ENCODE measurements at regions of chr1 and their contacts with region 1.

Region 1: DNA sequence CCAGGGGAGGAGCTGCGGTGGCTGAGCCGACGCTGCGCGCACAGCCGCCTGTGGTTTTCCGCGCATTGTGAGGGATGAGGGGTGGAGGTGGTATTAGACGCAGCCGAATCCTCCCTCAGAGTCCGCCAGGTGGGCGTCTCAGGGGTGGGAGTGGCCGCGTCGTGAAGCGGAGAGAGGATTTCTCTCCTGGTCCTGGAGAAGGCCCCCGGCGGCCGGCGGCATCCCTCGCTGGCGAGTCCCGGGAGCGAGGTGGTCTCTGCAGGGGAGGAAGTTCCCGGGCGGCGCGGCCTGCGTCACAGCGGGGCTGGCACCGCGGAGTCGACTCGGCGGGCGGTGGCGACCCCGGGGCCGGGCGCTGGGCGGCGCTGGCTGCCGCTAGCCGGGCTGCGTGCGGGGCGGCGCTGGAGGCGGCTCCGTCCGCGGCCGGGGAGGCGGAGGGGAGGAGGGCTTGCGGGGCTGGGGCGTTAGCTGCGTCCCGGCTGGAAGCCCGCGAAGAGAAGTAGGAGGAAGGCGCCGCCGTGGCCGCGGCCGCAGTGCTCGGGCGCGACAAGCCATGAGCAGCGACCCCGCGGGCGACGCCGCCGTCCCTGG is at the start of gene LRRC8C:
- DNase-seq: peak; percentile 90
- H3K4me3 Mint-ChIP-seq: peak within 1 kb of the TSS; percentile 88
- H3K27ac Mint-ChIP-seq: peak within 1 kb of the TSS; percentile 89
- H3K4me1 Mint-ChIP-seq: peaks cover 71% of the 10 kb centered on the region
- H3K27me3 Mint-ChIP-seq: no peaks in the 10 kb centered on the region
- total RNA-seq, gene LRRC8C: 52.5 to 55.6 TPM

Region 2: DNA sequence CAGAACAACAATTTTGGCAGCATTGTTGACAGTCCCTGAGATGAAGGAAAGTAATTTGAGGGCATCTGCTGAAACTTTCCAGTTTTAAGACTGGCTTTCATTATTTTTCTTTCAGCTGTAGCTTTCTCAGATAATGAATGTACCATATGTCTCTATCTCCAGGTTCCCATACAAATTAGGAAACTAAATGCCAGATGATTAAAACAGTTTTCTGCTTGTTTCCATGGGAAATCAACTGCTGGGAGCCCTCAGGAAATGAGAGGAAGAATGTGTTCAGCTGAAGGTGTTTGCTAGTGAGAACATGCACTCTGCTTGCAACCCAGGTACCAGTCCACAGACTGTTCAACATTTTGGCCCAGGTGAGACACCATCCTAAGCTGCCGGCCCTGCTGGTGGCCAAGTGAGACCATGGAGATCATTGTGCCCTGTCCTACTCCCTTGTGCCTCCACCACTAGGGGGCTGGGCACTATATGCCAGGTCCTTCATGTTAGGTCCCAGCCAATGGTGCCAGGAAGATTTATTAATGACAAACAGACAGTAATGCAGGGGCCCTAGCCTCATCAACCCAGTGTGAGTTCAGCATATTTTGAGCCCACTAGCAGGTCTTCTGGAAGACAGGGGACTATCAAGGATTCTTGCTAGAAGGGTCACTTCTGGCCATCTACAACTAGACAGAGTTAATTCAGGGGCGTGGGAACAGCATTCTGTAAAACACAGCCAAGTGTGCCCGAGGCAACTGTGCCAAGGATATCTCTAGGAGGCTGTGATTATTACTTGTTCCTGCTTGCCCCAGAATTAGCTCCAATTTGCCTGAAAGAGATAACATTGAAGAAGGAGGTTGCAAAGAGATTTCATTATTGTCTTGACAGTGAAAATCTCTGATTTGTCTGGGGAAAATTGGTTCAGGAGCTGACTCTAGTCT is 16.8 kb before region 1 on chr1:
- CTCF ChIA-PET with region 1: interaction called, 102 read pairs
- POLR2A ChIA-PET with region 1: interaction called, 828 read pairs
- DNase-seq: no peak
- H3K4me3 Mint-ChIP-seq: no peak overlapping the region
- H3K27ac Mint-ChIP-seq: no peak overlapping the region
- H3K4me1 Mint-ChIP-seq: peaks cover 83% of the 10 kb centered on the region
- H3K27me3 Mint-ChIP-seq: no peaks in the 10 kb centered on the region

Region 3: DNA sequence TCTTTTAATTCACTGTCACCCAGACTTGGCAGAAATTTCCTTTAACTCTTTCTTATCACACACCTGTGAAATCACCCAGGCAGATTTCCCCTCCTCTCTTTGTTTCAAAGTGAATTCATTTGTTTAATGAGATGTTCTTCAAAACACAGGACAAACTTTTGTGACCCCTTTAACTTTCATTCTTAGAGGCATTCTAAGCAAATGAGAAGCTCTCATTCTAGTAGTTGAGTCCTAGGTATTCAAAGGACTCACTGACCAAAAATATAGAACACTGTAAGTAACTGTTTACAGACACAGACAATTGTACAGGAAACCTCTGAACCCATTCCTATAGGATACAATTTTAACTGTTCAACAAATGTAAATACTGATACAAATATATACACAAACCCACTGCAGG is 17.0 kb after region 1 on chr1:
- CTCF ChIA-PET with region 1: interaction called, 5 read pairs
- POLR2A ChIA-PET with region 1: interaction called, 139 read pairs
- DNase-seq: no peak
- H3K4me3 Mint-ChIP-seq: no peak overlapping the region
- H3K27ac Mint-ChIP-seq: peak overlapping the region; percentile 3
- H3K4me1 Mint-ChIP-seq: peaks cover 62% of the 10 kb centered on the region
- H3K27me3 Mint-ChIP-seq: no peaks in the 10 kb centered on the region

Region 4: DNA sequence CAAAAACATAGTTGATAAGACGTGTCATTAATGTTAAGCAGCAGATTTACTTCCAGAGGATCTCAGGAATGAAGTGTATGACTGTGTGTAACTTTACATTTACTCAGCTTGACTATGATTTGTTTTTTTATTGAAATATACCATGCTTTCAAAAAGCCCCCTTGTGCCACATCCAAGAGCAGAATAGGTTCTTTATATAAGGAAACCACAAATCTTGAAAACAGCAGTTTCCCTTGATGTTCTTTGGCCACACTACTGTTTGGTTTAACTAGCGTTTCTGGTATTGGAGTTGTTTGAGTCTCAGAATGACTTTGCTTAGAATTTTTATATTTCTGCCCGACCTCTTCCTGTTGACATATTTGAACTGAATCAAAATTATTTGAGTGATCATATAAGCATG is 25.1 kb after region 1 on chr1:
- CTCF ChIA-PET with region 1: interaction called, 4 read pairs
- POLR2A ChIA-PET with region 1: interaction called, 139 read pairs
- DNase-seq: no peak
- H3K4me3 Mint-ChIP-seq: peak overlapping the region; percentile 15
- H3K27ac Mint-ChIP-seq: peak overlapping the region; percentile 81
- H3K4me1 Mint-ChIP-seq: peaks cover 88% of the 10 kb centered on the region
- H3K27me3 Mint-ChIP-seq: no peaks in the 10 kb centered on the region

Region 5: DNA sequence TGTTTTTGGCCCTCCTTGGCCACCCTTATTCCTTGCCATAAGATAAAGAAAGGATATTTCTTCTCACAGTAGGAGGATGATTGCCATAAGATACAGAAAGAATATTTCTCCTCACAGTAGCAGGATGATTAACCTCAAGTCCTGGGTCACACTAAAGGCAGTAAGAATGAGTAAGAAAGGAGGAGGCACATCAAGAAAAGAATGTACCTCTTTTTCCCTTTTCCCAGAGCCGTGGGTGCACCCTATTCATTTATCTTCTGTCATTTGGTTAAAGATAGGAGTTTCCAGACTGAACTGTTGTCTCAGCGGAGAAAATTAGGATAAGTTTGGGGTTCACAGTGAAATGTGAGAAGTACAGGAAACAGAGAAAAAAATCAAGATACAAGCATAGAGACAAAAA is 52.7 kb after region 1 on chr1:
- CTCF ChIA-PET with region 1: no interaction called
- POLR2A ChIA-PET with region 1: no interaction called
- DNase-seq: no peak
- H3K4me3 Mint-ChIP-seq: no peak overlapping the region
- H3K27ac Mint-ChIP-seq: no peak overlapping the region
- H3K4me1 Mint-ChIP-seq: peaks cover 46% of the 10 kb centered on the region
- H3K27me3 Mint-ChIP-seq: no peaks in the 10 kb centered on the region

Region 6: GRCh38 chr1:89701746-89702241 is 69.0 kb after region 1 on chr1:
- CTCF ChIA-PET with region 1: interaction called, 3 read pairs
- POLR2A ChIA-PET with region 1: interaction called, 29 read pairs
- DNase-seq: no peak
- H3K4me3 Mint-ChIP-seq: no peak overlapping the region
- H3K27ac Mint-ChIP-seq: peak overlapping the region; percentile 21
- H3K4me1 Mint-ChIP-seq: peaks cover 72% of the 10 kb centered on the region
- H3K27me3 Mint-ChIP-seq: no peaks in the 10 kb centered on the region

Measured in activated CD4-positive, alpha-beta memory T cell treated with anti-CD3 and anti-CD28 coated beads, Interleukin-2, amount 10 ng/mL, durations not matched to agents 7 days and 5 days (primary cell).